AG04450 (cell line): ENCODE measurements at regions of chr4 and their contacts with region 1.

Region 1: DNA sequence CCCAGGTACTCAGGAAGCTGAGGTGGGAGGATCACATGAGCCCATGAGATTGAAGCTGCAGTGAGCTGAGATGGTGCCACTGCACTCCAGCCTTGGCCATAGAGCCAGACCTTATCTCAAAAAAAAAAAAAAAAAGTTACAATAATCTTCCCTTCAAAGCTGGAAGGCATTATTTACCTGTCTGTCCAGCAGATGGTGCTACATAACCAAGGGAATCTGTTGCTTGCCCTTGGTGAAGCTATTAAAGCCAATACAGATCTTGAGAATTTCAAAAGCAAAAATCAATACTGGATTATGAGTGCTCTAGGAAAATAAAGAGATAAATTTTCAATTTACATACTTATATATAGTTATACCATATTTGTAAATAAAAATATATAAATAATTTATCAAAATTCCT is 25.9 kb downstream of the PKD2 start:
- DNase-seq: peak; percentile 39
- H3K4me3 ChIP-seq: no peak overlapping the region
- H3K27ac ChIP-seq: no peak overlapping the region
- H3K27me3 ChIP-seq: no peaks in the 10 kb centered on the region
- CTCF ChIP-seq: peak; percentile 76

Region 2: GRCh38 chr4:87949961-87950360 is 83.3 kb before region 1 on chr4:
- CTCF ChIA-PET with region 1: no interaction called
- POLR2A ChIA-PET with region 1: no interaction called
- DNase-seq: no peak
- H3K4me3 ChIP-seq: no peak overlapping the region
- H3K27ac ChIP-seq: no peak overlapping the region
- H3K27me3 ChIP-seq: no peaks in the 10 kb centered on the region
- CTCF ChIP-seq: no peak

Region 3: DNA sequence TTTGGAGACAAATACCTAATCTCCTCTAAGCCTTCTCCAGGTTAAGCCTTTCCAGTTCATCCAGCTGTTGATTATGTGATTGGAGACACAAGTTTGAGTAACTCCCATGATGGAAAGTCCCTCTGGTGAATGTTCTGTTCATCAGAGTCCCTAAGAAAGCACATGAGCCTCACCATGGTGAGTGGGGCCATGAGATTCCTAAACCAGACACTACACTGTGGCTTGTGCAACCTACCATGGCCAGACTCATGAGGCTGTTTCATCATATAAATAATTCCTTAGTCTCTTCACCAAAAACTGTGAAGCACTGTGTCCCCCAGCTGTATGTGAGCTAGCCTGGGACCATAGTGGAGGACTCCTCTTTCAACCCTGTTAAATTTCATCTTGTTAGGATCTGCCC is 11.5 kb before region 1 on chr4:
- CTCF ChIA-PET with region 1: interaction called, 18 read pairs
- POLR2A ChIA-PET with region 1: no interaction called
- DNase-seq: no peak
- H3K4me3 ChIP-seq: no peak overlapping the region
- H3K27ac ChIP-seq: no peak overlapping the region
- H3K27me3 ChIP-seq: no peaks in the 10 kb centered on the region
- CTCF ChIP-seq: no peak

Region 4: GRCh38 chr4:88202443-88202842 is 169.1 kb after region 1 on chr4:
- CTCF ChIA-PET with region 1: interaction called, 139 read pairs
- POLR2A ChIA-PET with region 1: no interaction called
- DNase-seq: no peak
- H3K4me3 ChIP-seq: no peak overlapping the region
- H3K27ac ChIP-seq: no peak overlapping the region
- H3K27me3 ChIP-seq: no peaks in the 10 kb centered on the region
- CTCF ChIP-seq: no peak

Region 5: DNA sequence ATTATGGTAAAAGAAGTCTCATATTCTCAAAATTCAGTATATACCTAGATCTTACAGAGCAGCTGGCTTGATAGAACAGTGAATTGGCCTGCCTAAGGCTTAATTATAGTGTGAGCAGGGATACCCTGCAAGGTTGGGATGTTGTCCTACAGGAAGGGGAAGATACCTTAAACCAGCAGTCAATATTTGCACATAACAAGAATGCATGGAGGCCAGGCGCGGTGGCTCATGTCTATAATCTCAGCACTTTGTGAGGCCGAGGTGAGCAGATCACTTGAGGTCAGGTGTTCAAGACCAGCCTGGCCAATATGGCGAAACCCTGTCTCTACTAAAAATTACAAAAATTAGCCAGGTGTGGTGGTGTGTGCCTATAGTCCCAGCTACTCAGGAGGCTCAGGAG is 183.9 kb after region 1 on chr4:
- CTCF ChIA-PET with region 1: interaction called, 139 read pairs
- POLR2A ChIA-PET with region 1: interaction called, 4 read pairs
- DNase-seq: no peak
- H3K4me3 ChIP-seq: no peak overlapping the region
- H3K27ac ChIP-seq: no peak overlapping the region
- H3K27me3 ChIP-seq: peaks cover 5% of the 10 kb centered on the region
- CTCF ChIP-seq: no peak